Ascending aorta (tissue), 2 donors: ENCODE measurements at regions of chr10 and their contacts with region 1.

Region 1: GRCh38 chr10:125160856-125161706 is 718 bp upstream of the CTBP2 start:
- DNase-seq: peak; percentile 56 to 90
- H3K4me3 ChIP-seq: peak overlapping the region; percentile 92 to 96
- H3K27ac ChIP-seq: peak overlapping the region; percentile 94 to 99
- H3K4me1 ChIP-seq: peaks cover 0 to 14% of the 10 kb centered on the region in 2 donors
- H3K27me3 ChIP-seq: no peaks in the 10 kb centered on the region
- CTCF ChIP-seq: peak; percentile 37 to 56 (median 41)

Region 2: DNA sequence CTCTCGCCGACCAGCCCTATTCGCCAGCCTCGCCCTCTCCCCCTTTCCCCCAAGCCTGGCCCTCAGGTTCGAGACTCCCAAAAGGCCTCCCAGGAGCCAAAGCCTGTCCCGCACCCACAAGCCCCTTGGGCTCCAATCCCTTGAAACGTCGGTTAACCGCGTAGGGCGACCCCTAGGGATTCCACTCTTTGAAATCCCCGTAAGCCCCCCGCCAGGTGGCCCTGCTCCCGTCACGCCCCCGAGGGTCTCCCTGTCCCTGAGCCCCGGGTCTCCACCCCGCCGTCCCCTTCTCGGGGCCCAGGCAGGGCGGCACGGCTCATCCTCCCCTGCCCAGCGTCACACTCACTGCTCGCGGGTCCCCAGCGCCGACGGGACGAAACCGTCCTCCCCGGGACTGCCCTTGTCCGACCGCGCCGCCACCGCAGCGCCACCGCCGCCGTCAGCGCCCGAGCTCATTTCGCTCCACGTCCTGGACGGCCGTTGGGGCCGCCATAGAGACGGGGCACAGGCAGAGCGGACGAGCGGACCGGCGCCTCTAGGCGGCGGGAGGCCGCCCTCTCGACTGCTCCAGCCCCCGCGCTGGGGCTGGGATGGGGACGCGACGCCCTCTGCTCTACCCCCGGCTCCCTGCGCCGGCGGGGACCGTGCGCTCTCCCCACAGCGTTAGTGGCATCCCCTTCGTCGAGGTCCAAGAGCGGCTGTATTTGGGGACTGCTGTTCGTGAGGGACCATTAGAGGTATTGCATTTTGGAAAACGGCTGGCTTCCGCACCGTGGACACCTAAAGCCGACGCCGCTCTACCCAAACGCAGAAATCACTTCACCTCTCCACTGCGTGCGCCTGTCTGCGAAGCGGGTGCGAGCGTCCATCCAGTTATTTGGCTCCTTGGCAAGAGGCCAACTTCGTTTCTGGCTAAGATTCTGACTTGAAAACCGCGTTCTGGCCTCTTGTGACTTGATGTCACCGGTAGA is 369.4 kb before region 1 on chr10 and contains the start of gene EEF1AKMT2:
- intact Hi-C with region 1: loop called (anchors 10 kb)
- DNase-seq: peak; percentile 20 to 88
- H3K4me3 ChIP-seq: peak within 1 kb of the TSS; percentile 81 to 94
- H3K27ac ChIP-seq: peak within 1 kb of the TSS; percentile 75 to 93
- H3K4me1 ChIP-seq: peaks cover 3 to 6% of the 10 kb centered on the region in 2 donors
- H3K27me3 ChIP-seq: no peaks in the 10 kb centered on the region
- CTCF ChIP-seq: peak; percentile 28 to 66 (median 54)
- total RNA-seq, gene EEF1AKMT2: 10.5 TPM

Region 3: GRCh38 chr10:124916585-124917427 is 244.3 kb before region 1 on chr10:
- intact Hi-C with region 1: loop called (anchors 5 kb)
- DNase-seq: peak; percentile 91 to 99
- H3K4me3 ChIP-seq: peak overlapping the region; percentile 95 to 96
- H3K27ac ChIP-seq: peak overlapping the region; percentile 98
- H3K4me1 ChIP-seq: peaks cover 3 to 29% of the 10 kb centered on the region in 2 donors
- H3K27me3 ChIP-seq: no peaks in the 10 kb centered on the region
- CTCF ChIP-seq: peak in 1 of 3 experiments; percentile 6

Region 4: GRCh38 chr10:125084191-125084613 is 76.9 kb before region 1 on chr10:
- intact Hi-C with region 1: loop called (anchors 1 kb)
- DNase-seq: peak; percentile 56 to 91
- H3K4me3 ChIP-seq: peak overlapping the region in 1 of 2 donors; percentile 46
- H3K27ac ChIP-seq: peak overlapping the region; percentile 90 to 93
- H3K4me1 ChIP-seq: peaks cover 10 to 38% of the 10 kb centered on the region in 2 donors
- H3K27me3 ChIP-seq: no peaks in the 10 kb centered on the region
- CTCF ChIP-seq: peak in 2 of 3 experiments; percentile 10 to 24

Region 5: DNA sequence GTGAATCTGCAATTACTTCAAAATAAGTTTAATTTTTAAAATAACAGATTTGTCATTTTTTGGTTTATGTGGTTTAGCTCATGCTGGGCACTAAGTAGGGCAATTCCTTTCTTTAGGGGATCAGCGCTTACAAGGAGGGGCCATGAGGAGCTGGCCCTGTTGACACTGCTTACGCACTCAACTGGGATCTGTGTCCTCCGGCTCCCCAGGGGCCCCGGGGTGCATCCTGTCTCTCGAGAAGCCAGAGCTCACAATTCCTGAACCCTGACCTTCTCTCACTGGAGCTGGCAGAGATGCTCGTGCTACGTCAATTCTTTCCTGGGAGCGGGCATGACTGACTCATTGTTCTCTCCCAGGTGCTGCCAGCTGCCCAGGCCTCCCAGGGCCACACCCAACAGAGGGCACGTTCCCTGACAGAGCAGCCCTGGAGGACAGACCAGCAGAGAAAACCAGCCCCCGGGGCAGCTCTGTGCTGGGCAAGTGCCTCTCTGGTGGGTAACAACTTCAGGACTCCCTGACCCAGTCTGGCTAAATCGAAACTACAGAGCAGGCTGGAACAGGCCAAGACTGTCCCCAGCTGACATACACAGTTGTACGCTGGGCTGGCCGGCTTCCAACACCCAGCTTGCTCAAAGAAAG is 37.5 kb before region 1 on chr10:
- intact Hi-C with region 1: loop called (anchors 2 kb)
- DNase-seq: peak; percentile 68 to 88
- H3K4me3 ChIP-seq: peak overlapping the region; percentile 39 to 53
- H3K27ac ChIP-seq: peak overlapping the region; percentile 76 to 82
- H3K4me1 ChIP-seq: peaks cover 2 to 63% of the 10 kb centered on the region in 2 donors
- H3K27me3 ChIP-seq: no peaks in the 10 kb centered on the region
- CTCF ChIP-seq: no peak

Region 6: DNA sequence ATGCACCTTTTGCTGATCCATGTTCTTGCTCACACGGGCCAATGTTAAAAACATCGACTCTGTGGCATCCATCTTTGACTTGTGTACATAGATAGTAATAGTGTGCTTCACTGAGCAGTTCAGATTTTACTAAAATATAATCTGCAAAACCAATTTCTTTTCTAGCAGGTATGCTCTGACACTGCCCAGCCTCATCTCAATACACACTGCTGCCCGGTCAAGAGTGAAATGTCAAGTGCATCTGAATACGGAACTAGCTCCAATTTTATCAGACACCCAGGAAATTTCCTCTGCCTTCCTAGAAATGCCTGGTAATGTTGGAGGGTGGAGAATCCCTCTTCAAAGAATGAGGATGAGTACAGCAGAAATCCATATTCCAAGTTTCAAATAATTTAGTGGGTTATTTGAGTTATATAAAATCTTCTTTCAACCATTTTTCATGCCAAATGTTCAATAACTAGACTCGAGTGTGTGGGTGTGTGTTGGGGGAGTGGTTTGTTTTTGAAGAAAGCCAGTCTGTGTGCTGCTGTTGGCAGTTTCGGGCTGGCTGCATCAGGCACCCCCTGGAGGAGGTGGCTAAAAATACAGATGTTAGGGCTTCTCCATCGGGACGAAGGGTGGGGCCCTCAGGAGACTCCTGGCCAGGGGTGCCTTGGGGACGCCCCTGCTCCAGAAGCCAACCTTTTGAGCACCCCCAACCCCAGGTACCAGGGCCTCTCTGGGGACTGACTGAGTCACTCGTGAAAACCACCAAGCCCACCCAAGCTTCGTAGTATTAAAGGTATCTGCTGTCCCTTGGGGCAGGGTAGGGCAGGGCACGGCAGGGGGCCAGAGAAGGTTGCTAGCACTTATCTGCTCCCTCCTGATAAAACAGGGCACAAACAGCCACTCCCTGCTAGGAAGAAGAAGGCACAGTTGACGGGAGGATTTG is 16.1 kb before region 1 on chr10:
- intact Hi-C with region 1: no loop called
- DNase-seq: no peak
- H3K4me3 ChIP-seq: no peak overlapping the region
- H3K27ac ChIP-seq: peak overlapping the region; percentile 30 to 89
- H3K4me1 ChIP-seq: peaks cover 29 to 71% of the 10 kb centered on the region in 2 donors
- H3K27me3 ChIP-seq: no peaks in the 10 kb centered on the region
- CTCF ChIP-seq: peak; percentile 22 to 52 (median 24)

Region 7: GRCh38 chr10:125171402-125172306 is 10.6 kb after region 1 on chr10:
- intact Hi-C with region 1: no loop called
- DNase-seq: no peak
- H3K4me3 ChIP-seq: no peak overlapping the region
- H3K27ac ChIP-seq: no peak overlapping the region
- H3K4me1 ChIP-seq: no peaks in the 10 kb centered on the region
- H3K27me3 ChIP-seq: no peaks in the 10 kb centered on the region
- CTCF ChIP-seq: no peak

Region 8: DNA sequence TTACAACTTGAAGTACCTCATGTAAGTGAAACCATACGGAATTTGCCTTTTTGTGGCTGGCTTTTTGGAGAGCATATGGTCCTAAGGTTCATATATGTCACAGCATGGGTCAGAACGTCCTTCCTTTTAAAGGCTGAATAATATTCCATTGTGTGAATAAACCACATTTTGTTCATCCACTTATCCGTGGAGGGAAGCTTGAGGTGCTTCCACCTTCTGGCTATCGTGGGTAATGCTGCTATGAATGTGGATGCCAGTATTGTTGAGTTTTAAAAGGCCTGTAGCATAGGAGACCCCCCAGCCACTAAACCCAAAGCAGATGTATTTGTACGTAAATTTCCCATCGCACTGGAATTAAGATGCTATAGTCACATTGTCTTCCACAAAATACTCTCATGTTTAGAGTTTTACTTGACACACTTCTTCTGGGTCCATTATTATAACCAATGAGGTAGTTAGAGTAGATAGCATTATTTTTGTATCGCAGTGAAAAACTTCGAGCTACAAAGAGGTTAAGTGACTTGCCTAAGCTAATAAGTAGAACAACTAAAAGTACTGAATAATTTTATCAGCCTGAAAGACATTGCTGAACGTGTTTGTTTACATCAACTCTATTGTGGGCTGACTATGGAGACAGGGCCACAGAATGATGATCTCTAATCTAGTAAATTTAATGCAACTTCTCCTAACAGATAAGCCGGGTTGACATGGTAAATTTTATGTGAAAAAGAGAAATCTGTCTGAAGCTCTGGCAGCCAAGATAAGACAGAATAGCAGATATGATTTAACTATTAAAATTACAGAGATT is 182.2 kb after region 1 on chr10:
- intact Hi-C with region 1: no loop called
- DNase-seq: no peak
- H3K4me3 ChIP-seq: no peak overlapping the region
- H3K27ac ChIP-seq: no peak overlapping the region
- H3K4me1 ChIP-seq: no peaks in the 10 kb centered on the region
- H3K27me3 ChIP-seq: no peaks in the 10 kb centered on the region
- CTCF ChIP-seq: peak; percentile 15 to 55 (median 31)

Region 9: GRCh38 chr10:125375210-125375609 is 214.1 kb after region 1 on chr10:
- intact Hi-C with region 1: no loop called
- DNase-seq: no peak
- H3K4me3 ChIP-seq: no peak overlapping the region
- H3K27ac ChIP-seq: no peak overlapping the region
- H3K4me1 ChIP-seq: no peaks in the 10 kb centered on the region
- H3K27me3 ChIP-seq: no peaks in the 10 kb centered on the region
- CTCF ChIP-seq: no peak

Region 10: DNA sequence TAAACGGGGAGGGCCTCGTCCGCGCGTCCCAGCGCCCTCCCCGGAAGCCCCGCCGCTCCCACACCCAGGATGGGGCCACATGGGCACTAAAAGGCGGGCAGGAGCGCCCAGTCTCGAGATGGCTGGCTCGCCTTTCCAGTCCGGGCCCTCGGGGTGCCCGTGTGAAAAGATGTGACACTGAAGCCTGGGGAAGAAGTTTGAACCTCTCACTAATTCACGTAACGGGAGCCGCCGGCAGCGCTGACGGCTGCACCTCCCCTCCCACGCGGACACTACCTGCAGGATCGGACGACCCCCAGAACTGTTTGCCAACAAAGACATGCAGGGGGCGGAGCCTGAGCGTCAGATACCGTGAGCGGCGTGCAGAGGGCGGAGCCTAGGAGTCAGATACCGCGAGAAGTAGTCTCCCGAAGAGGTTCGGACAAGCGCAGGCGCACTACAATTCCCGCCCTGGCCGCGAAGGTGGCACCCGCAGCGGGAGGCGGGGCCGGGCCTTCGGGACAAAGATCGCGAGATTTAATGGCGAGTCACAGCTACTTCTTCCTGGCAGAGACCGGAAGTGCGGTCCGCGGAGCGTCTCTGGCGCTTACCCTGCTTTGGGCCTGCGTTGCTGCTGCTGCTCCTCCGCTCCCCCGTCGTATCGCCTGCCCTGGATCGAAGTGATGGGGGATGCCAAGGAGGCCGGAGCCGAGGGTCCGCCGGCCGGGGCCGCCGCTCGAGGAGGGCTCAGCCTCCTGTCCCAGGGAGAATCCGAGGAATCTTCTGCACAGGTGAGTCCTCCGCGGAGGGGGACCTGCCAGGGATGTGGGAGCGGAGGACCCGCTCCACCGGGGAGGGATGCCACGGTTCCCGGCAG is 558.3 kb after region 1 on chr10 and contains the start of gene EDRF1:
- intact Hi-C with region 1: loop called (anchors 2 kb)
- DNase-seq: peak; percentile 96 to 100
- H3K4me3 ChIP-seq: peak within 1 kb of the TSS; percentile 93 to 94
- H3K27ac ChIP-seq: peak within 1 kb of the TSS; percentile 85 to 95
- H3K4me1 ChIP-seq: peaks cover 3 to 13% of the 10 kb centered on the region in 2 donors
- H3K27me3 ChIP-seq: no peaks in the 10 kb centered on the region
- CTCF ChIP-seq: no peak
- total RNA-seq, gene EDRF1: 0.53 TPM